A673 (cell line): ENCODE measurements at regions of chr3 and their contacts with region 1.

Region 1: DNA sequence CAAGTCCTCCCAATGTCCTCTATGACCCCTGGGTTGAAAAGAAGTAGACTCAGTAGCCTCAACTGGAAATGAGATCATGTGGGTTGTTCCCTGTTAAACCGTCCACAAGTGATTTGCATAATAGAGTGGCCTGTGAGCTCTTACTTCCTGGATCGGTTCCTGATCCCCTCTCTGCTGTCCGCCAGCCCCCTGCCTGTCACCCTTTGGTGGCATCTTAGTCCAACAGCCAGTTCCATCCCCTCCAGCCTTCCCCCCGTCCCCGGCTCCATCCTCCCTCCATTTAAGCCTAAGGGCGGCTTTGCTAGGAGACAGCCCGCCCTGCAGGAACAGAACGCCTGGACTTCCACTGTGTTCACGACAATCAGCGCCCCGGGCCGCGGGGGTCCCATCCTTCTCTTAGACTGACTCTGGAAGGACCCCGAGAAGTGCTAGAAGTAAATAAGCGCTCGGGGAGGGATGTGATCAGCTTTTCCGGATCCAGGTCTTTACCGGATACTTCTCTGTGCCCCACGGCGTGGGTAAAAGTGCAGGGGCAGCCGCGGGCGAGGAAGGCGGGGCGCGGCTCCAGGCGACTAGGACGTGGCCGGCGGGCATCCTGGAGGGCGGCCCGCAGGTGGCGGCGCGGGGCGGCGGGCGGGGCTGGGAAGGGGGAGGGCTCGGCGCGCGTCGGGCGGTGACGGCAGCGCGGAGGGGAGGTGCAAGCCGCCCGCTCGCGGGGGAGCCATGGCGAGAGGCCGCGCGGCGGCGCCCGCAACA is 51.2 kb upstream of the ULK4 start:
- DNase-seq: peak; percentile 53
- H3K4me3 ChIP-seq: peak overlapping the region; percentile 66
- H3K27ac ChIP-seq: no peak overlapping the region
- H3K4me1 ChIP-seq: no peaks in the 10 kb centered on the region
- H3K27me3 ChIP-seq: no peaks in the 10 kb centered on the region
- CTCF ChIP-seq: no peak

Region 2: GRCh38 chr3:42061713-42062408 is 48.7 kb after region 1 on chr3:
- CTCF ChIA-PET with region 1: no interaction called
- POLR2A ChIA-PET with region 1: no interaction called
- intact Hi-C with region 1: loop called (anchors 5 kb)
- DNase-seq: peak; percentile 82
- H3K4me3 ChIP-seq: no peak overlapping the region
- H3K27ac ChIP-seq: peak overlapping the region; percentile 64
- H3K4me1 ChIP-seq: peaks cover 22% of the 10 kb centered on the region
- H3K27me3 ChIP-seq: no peaks in the 10 kb centered on the region
- CTCF ChIP-seq: no peak

Region 3: DNA sequence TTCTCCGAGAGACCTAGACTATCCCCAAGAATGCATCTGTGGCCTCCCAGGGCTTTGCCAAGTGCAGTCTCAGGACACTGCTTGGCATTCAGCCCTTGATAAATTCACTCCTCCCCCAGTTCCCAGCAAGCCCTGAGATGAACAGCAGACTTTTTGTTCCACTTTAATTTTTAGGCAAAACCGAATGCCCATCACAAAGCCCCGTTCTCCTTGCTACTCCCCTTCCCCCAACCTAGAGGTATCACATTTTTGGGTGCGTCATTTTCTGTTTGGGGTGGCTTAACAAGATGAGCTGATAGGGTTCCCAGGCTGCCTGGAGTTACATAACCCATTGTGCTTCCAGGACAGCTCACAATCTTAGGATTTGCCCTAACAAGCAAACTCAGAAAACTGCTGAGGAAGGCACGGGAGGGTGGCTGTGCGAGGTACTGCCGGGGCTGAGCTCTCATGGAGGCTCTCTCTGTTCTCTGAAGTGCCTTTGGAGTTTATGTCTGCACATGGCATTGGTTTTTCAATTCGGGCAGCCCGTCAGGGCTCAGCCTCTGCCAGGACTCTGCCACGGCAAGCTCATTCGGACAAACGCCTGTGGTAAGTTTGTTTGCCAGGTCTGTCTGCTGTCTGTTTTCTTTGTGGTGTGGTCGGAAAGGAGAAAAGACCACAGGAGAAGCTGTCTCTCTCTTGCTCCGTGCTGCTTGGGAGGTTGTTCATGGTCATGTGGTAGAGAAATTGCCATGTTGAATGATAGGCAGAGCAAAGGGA is 78.0 kb after region 1 on chr3 and contains the start of gene TRAK1:
- CTCF ChIA-PET with region 1: no interaction called
- POLR2A ChIA-PET with region 1: no interaction called
- intact Hi-C with region 1: loop called (anchors 10 kb)
- DNase-seq: no peak
- H3K4me3 ChIP-seq: no peak within 1 kb of the TSS
- H3K27ac ChIP-seq: no peak within 1 kb of the TSS
- H3K4me1 ChIP-seq: no peaks in the 10 kb centered on the region
- H3K27me3 ChIP-seq: no peaks in the 10 kb centered on the region
- CTCF ChIP-seq: no peak
- total RNA-seq, gene TRAK1: 16.3 and 21.1 TPM in 2 replicates